Heart right ventricle (tissue), 16 donors: ENCODE measurements at regions of chr12 and their contacts with region 1.

Region 1: DNA sequence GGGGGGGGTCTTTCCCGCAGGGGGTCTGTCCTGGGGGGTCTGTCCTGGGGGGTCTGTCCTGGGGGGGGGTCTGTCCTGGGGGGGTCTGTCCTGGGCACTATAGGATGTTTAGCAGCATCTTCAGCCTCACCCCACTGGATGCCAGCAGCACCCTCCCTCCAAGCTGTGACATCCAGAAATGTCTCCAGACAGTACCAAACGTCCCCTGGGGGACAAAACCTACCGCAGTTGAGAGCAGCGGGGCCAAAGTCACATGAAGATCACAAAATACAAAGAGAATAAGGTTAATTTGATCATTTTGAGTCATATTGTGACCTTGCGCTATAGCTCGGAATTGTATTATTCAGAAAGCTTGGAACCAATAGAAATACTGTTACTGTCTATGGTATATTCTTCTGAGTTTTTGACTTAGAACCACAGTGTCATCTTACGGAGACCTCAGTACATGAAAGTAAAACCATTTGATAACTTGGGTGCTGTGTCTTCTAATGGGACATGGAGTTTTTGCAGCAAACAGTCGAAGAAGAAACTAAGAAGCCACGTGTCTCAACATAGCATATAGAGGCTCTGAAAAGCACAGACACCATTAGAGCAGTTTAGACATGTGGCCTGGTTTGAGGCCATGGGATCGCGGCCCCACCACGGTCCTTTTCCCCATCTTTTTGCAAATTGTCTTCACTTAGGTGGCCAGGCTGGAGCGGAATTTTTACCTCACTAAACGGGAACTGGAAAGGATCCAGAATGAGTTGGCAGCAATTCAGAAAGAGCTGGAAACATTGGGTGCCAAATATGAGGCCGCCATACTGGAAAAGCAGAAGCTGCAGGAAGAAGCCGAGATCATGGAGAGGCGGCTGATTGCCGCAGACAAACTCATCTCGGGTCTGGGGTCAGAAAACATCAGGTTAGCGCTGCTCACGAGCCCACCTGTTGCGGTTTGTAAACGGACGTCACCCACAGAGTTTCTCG is 59.9 kb downstream of the CCDC92 start:
- DNase-seq: no peak
- ATAC-seq: no peak
- H3K4me3 ChIP-seq: no peak overlapping the region
- H3K27ac ChIP-seq: no peak overlapping the region
- H3K4me1 ChIP-seq: peaks cover 0 to 2% (median 0%) of the 10 kb centered on the region in 9 donors
- H3K27me3 ChIP-seq: peaks cover 0 to 31% (median 6%) of the 10 kb centered on the region in 7 donors
- CTCF ChIP-seq: no peak

Region 2: GRCh38 chr12:123757561-123757960 is 155.1 kb before region 1 on chr12:
- intact Hi-C with region 1: no loop called
- DNase-seq: no peak
- ATAC-seq: no peak
- H3K4me3 ChIP-seq: no peak overlapping the region
- H3K27ac ChIP-seq: no peak overlapping the region
- H3K4me1 ChIP-seq: peaks cover 0 to 12% (median 4%) of the 10 kb centered on the region in 9 donors
- H3K27me3 ChIP-seq: peaks cover 0 to 21% (median 12%) of the 10 kb centered on the region in 7 donors
- CTCF ChIP-seq: no peak

Region 3: DNA sequence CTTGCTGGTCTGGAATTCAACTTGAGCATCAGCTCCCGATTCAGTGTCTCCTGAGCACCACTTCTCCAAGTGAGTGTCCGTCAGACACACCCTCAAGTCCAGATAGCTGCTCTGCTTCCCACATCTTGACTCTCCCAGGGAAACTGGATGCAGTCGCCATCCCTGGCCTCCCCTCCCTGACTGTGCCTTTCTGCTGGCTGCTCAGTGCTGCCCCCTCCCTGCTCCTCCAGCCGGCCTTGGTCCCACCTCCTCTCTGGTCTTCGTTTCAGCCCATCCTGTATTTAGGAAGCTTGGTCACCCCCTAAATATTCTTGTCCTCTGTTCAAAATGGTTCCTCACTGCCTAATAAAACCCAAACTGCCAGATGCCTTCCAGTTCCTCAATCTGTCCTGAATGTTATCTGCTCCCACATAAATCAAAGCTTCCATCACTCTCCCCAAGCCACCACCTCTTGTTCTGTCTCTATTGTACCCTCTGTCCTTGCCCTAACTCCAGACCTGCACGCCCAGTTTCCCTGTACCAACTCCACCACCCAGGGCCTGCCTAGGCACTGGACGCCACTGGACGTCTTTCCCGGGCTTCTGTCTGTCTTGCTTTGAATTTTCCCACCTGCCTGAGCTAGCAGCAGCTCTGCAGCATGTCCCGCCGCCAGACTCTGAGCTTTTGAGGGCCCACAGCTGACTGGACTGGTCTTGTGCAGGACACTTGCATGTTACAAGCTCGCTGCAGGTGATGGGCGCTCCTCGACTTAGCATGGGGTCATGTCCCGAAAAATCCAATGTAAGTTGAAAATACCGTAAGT is 26.2 kb after region 1 on chr12:
- intact Hi-C with region 1: loop called in 1 of 10 experiments (anchors 2 kb)
- DNase-seq: no peak
- ATAC-seq: no peak
- H3K4me3 ChIP-seq: no peak overlapping the region
- H3K27ac ChIP-seq: peak overlapping the region in 1 of 10 donors; percentile 58
- H3K4me1 ChIP-seq: peaks cover 0 to 16% (median 0%) of the 10 kb centered on the region in 9 donors
- H3K27me3 ChIP-seq: no peaks in the 10 kb centered on the region
- CTCF ChIP-seq: peak in 5 of 9 donors; percentile 10 to 38 (median 21)